ENCODE measurements at regions of chr16 and their contacts with region 1.

Region 1: GRCh38 chr16:31108035-31108793 is at the start of gene BCKDK:
- DNase-seq: peak; percentile 67 to 78 (median 71)
- H3K4me3 ChIP-seq: peak within 1 kb of the TSS; percentile 17 to 80 (median 52)
- H3K27ac ChIP-seq: peak within 1 kb of the TSS; percentile 64 to 87 (median 79)
- H3K4me1 ChIP-seq: peaks cover 24 to 35% of the 10 kb centered on the region in 2 donors
- H3K27me3 ChIP-seq: no peaks in the 10 kb centered on the region
- CTCF ChIP-seq: no peak
- POLR2A ChIP-seq: peak; percentile 31 to 38
- total RNA-seq, gene BCKDK: 27.0 to 181 (median 104) TPM

Region 2: GRCh38 chr16:30997000-30997886 is 111.0 kb before region 1 on chr16:
- intact Hi-C with region 1: no loop called
- DNase-seq: peak; percentile 78 to 88 (median 84)
- H3K4me3 ChIP-seq: peak overlapping the region in 2 of 4 donors; percentile 29 to 60
- H3K27ac ChIP-seq: peak overlapping the region; percentile 38 to 90 (median 80)
- H3K4me1 ChIP-seq: peaks cover 15 to 21% of the 10 kb centered on the region in 2 donors
- H3K27me3 ChIP-seq: no peaks in the 10 kb centered on the region
- CTCF ChIP-seq: no peak
- POLR2A ChIP-seq: peak; percentile 44 to 48

Region 3: DNA sequence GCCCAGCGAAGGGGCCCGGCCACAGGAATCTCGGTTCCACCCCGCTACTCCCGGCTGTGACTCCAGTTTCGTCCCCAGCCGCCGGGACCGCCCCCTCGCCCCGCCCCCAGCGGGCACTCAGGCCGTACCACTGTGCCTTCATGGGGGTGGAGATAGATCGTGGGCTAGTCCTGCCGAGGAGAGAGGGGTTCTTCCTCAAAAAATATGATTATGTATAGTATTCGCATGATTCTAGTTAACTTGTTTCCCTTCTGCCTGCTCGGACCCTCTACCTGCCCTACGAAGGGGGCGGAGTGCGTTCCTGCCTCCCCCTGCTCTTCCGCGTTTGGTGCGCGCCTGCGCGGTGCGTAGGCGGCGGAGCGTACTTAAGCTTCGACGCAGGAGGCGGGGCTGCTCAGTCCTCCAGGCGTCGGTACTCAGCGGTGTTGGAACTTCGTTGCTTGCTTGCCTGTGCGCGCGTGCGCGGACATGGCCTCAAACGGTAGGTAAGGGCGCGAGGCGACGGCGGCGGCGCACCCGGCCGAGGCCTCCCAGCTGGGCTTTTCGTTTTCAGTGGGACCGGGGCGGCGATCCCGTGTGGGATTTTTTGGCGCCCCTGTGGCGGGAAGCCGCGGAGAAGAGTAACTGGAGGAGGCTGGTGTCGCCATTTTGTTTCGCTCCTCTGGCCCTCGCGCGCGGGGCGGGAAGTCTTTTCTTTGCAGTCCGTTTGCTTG is 71.7 kb after region 1 on chr16 and contains the start of gene FUS:
- intact Hi-C with region 1: loop called in 1 of 2 experiments (anchors 5 kb)
- DNase-seq: peak; percentile 87 to 96 (median 93)
- H3K4me3 ChIP-seq: peak within 1 kb of the TSS; percentile 73 to 97 (median 80)
- H3K27ac ChIP-seq: peak within 1 kb of the TSS; percentile 79 to 97 (median 95)
- H3K4me1 ChIP-seq: peaks cover 25 to 36% of the 10 kb centered on the region in 2 donors
- H3K27me3 ChIP-seq: no peaks in the 10 kb centered on the region
- CTCF ChIP-seq: peak in 3 of 6 experiments; percentile 9 to 28 (median 13)
- POLR2A ChIP-seq: peak; percentile 99
- total RNA-seq, gene FUS: 12.7 to 285 (median 47.5) TPM

Region 4: DNA sequence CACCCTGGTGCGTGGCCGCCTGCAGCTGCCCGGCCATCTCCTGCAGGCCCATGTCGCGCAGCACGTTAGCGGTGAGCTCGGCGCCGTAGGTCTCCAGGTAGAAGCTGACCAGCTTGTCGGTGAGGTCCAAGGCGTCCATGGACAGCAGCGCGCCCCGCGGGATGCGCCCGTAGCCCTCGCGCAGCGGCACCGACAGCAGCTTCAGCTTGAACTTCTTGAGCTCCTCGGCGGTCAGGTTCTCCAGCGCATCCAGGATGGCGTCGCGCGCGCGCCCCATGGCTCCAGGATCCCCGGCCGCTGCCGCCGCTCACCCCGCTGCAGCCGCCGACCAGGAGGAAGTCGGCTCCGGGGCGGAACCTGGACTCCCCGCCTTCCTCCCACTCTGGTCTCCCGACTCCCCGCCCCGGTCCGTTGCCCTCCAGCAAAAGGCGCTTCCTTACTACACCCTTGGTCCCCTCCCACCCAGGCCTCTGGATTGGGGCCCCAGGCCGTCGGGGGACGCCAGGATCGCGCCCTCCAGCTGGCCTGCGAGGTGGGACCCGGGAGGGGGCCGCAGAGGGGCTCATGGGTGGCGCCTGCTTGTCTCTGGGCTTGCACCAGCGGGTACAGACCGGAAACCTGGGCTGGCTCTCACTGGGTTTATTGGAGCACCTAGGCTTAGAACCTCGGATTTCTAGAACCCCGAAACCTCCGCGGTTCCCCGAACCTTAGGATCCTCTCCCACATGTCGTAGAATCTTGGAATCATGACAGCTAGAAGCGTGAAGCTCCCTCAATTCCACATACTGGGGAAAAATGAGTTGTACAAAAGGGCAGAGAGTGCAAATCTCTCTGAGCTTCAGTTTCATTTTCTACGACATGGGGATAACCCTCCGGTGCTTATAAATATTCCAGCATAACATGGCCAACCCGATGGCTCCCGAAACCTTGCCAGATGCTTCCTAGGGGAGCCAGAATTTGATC is 94.5 kb after region 1 on chr16 and contains the start of gene PYCARD:
- intact Hi-C with region 1: no loop called
- DNase-seq: peak in 5 of 7 donors; percentile 38 to 53 (median 46)
- H3K4me3 ChIP-seq: peak within 1 kb of the TSS in 2 of 4 donors; percentile 35 to 70
- H3K27ac ChIP-seq: peak within 1 kb of the TSS; percentile 10 to 68 (median 43)
- H3K4me1 ChIP-seq: peaks cover 0 to 19% of the 10 kb centered on the region in 2 donors
- H3K27me3 ChIP-seq: no peaks in the 10 kb centered on the region
- CTCF ChIP-seq: no peak
- POLR2A ChIP-seq: no peak
- total RNA-seq, gene PYCARD: 9.6 to 54.4 (median 23.6) TPM